ENCODE measurements at regions of chr7 and their contacts with region 1.

Region 1: DNA sequence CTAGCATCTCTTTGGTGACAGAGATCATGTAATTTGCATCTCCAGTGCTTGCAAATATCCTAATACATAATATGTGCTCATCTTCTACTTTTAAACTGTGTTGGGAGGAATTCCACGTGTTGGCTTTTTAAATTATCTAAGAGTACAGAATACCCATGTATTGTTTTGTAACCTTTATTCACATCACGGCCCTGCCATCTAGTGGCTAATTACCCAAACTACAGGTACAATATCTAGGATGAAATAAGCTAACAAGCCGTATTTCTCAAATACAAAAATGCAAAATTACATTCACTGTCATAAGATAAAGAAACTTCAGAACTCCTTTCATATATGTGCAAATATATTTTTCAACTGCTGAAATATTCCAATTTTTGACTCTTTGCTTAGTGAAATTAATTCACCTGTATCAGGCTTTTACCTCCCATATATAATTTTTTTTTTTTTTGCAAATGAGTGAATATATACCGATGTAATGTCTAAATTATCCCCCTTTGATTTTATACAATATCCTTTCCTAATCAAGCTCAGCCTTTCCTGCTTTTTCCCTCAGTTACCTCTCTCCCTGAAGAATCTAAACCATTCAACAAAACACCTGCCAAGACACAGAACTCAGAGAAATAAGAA is 30.3 kb upstream of the LSM8 start:
- DNase-seq: peak; percentile 40
- H3K4me3 Mint-ChIP-seq: no peak overlapping the region
- H3K27ac Mint-ChIP-seq: no peak overlapping the region
- H3K4me1 Mint-ChIP-seq: no peaks in the 10 kb centered on the region
- H3K27me3 Mint-ChIP-seq: peaks cover 14% of the 10 kb centered on the region

Region 2: GRCh38 chr7:116929914-116930913 is 1223.5 kb before region 1 on chr7:
- CTCF ChIA-PET with region 1: no interaction called
- intact Hi-C with region 1: loop called (anchors 1 kb)
- DNase-seq: peak; percentile 85
- H3K4me3 Mint-ChIP-seq: no peak overlapping the region
- H3K27ac Mint-ChIP-seq: no peak overlapping the region
- H3K4me1 Mint-ChIP-seq: peaks cover 3% of the 10 kb centered on the region
- H3K27me3 Mint-ChIP-seq: no peaks in the 10 kb centered on the region

Region 3: DNA sequence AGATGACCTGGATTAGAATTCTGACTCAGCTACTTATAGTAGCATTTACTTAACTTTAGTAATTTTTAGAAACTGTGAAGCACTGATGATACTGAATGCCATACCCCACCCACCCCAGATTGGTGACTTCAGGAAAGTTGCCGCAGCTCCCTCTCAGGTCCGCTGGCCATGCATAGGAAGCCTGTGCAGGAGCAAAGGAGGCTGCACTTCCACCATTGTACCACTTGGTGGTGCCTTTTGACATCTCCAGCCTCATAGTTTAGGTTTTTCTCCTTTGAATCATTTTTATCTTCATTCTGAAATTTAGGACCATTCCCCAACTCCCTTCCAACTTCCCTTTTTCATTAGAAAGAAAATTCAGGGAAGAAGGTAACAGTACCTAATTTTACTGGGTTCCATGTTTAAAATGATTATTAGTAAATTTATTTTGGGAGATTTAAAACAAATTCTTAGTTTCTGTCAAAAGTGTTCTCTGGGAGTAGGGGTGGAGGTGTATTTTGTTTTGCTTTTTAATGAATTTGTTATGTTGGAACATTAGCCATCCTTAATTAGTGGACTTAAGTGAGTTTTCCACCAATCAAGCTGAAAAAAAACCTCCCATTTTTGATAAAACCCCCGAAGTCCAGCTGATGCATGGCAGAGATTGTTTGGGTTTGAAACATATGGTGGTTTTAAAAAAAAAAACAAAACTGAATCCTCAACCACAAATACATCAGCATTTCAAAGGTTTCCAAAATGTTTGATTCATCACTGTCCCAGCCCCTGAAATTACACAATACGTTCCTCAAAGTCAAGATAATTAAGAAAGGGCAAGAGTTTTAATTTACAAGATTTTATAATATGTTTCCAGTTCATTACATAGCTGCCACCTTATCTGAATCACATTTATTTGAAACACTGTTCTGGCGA is 940.4 kb before region 1 on chr7:
- CTCF ChIA-PET with region 1: no interaction called
- intact Hi-C with region 1: loop called (anchors 1 kb)
- DNase-seq: peak; percentile 66
- H3K4me3 Mint-ChIP-seq: no peak overlapping the region
- H3K27ac Mint-ChIP-seq: no peak overlapping the region
- H3K4me1 Mint-ChIP-seq: no peaks in the 10 kb centered on the region
- H3K27me3 Mint-ChIP-seq: no peaks in the 10 kb centered on the region

Region 4: GRCh38 chr7:117399820-117400422 is 753.7 kb before region 1 on chr7:
- CTCF ChIA-PET with region 1: no interaction called
- intact Hi-C with region 1: loop called (anchors 1 kb)
- DNase-seq: no peak
- H3K4me3 Mint-ChIP-seq: no peak overlapping the region
- H3K27ac Mint-ChIP-seq: no peak overlapping the region
- H3K4me1 Mint-ChIP-seq: no peaks in the 10 kb centered on the region
- H3K27me3 Mint-ChIP-seq: no peaks in the 10 kb centered on the region

Region 5: DNA sequence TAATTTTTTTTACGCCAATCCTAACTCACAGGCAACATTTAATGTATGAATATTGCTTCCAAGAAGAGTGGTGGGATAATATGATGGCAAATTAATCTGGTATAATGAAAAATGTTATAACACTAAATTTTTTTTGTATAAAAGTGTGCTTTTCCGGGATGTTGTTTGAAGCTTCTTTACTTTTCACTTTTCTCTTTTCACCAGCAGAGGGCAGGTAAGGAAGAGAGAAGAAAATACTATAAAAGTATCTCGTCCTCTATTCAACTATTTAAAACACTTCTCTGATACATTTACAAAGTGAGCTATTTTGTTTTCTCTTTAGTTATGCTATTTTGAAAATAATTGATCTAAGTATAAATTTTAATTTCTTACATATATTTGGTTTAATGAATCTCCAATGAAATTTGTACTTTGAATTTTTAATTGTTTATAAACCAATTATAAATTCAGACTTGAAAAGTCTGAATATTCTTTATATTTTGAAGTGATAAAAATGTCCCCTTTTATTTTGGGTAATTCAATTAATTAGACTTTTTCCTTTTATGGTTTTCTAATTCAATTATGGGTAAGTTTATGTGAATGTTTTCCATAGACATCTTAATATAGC is 694.6 kb before region 1 on chr7:
- CTCF ChIA-PET with region 1: interaction called, 3 read pairs
- intact Hi-C with region 1: loop called (anchors 1 kb)
- DNase-seq: no peak
- H3K4me3 Mint-ChIP-seq: no peak overlapping the region
- H3K27ac Mint-ChIP-seq: no peak overlapping the region
- H3K4me1 Mint-ChIP-seq: no peaks in the 10 kb centered on the region
- H3K27me3 Mint-ChIP-seq: no peaks in the 10 kb centered on the region

Region 6: GRCh38 chr7:117750612-117751563 is 402.8 kb before region 1 on chr7:
- CTCF ChIA-PET with region 1: no interaction called
- intact Hi-C with region 1: loop called (anchors 1 kb)
- DNase-seq: no peak
- H3K4me3 Mint-ChIP-seq: no peak overlapping the region
- H3K27ac Mint-ChIP-seq: no peak overlapping the region
- H3K4me1 Mint-ChIP-seq: no peaks in the 10 kb centered on the region
- H3K27me3 Mint-ChIP-seq: no peaks in the 10 kb centered on the region

Region 7: GRCh38 chr7:118072893-118073674 is 80.6 kb before region 1 on chr7:
- CTCF ChIA-PET with region 1: no interaction called
- intact Hi-C with region 1: no loop called
- DNase-seq: no peak
- H3K4me3 Mint-ChIP-seq: no peak overlapping the region
- H3K27ac Mint-ChIP-seq: no peak overlapping the region
- H3K4me1 Mint-ChIP-seq: no peaks in the 10 kb centered on the region
- H3K27me3 Mint-ChIP-seq: peaks cover 23% of the 10 kb centered on the region